Activated CD4-positive, alpha-beta memory T cell treated with anti-CD3 and anti-CD28 coated beads for 36 hours (primary cell): ENCODE measurements at regions of chr6 and their contacts with region 1.

Region 1: DNA sequence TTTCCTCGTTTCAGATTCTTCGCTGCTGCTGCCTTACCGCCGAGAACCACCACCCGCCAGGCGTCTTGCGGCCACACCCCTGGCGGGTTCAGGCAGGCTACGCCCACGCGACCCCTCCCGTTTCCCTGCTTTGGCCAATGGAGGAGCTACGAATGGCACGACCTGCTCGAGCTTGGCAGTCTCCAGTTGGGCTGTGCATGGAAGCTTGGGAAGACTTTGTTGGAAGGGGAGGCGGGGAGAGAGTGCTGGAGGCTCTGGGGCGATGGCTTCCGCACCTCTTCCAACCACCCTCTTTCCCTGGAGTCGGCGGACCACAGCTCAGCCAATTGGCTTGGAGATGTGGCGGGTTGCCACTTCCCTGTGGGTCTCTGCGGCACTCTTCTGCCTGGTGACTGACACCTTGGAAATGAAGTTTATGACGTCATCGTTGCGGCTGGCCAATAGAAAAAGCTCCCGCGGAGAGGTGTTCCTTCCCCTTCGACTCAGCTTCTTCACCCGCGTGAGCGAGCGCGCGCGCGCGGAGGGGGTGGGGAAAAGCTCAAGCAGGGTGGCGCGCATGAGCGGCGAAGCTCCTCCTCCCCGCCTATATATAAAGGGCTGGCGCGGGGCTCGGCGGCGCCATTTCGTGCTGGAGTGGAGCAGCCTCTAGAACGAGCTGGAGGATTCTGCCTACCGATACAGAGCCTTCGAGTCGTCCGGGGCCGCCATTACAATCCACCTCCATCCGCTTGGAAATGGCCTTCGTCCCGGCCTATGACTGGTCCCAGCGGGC is 3.4 kb downstream of the BRD2 start:
- DNase-seq: peak; percentile 100
- H3K4me3 Mint-ChIP-seq: peak overlapping the region; percentile 98
- H3K27ac Mint-ChIP-seq: peak overlapping the region; percentile 99
- H3K4me1 Mint-ChIP-seq: peaks cover 26% of the 10 kb centered on the region
- H3K27me3 Mint-ChIP-seq: no peaks in the 10 kb centered on the region

Region 2: DNA sequence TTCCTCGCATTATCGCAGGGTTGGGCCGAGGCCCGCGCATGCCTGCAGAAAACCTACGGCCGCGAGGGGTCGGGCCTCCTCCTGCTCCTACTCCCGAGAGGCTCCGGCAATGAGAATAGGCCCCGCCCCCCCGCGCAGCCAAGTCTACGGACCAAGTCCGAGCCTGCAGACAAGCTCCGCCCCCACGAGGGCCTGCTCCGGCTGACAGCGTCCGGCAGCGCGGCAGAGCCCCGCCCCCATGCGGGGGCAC is 776.2 kb before region 1 on chr6:
- CTCF ChIA-PET with region 1: interaction called, 3 read pairs
- POLR2A ChIA-PET with region 1: no interaction called
- intact Hi-C with region 1: loop called (anchors 1 kb)
- DNase-seq: peak; percentile 100
- H3K4me3 Mint-ChIP-seq: peak overlapping the region; percentile 96
- H3K27ac Mint-ChIP-seq: peak overlapping the region; percentile 98
- H3K4me1 Mint-ChIP-seq: peaks cover 23% of the 10 kb centered on the region
- H3K27me3 Mint-ChIP-seq: no peaks in the 10 kb centered on the region

Region 3: GRCh38 chr6:32597024-32597423 is 374.7 kb before region 1 on chr6:
- CTCF ChIA-PET with region 1: no interaction called
- POLR2A ChIA-PET with region 1: no interaction called
- intact Hi-C with region 1: no loop called
- DNase-seq: no peak
- H3K4me3 Mint-ChIP-seq: no peak overlapping the region
- H3K27ac Mint-ChIP-seq: no peak overlapping the region
- H3K4me1 Mint-ChIP-seq: no peaks in the 10 kb centered on the region
- H3K27me3 Mint-ChIP-seq: no peaks in the 10 kb centered on the region

Region 4: DNA sequence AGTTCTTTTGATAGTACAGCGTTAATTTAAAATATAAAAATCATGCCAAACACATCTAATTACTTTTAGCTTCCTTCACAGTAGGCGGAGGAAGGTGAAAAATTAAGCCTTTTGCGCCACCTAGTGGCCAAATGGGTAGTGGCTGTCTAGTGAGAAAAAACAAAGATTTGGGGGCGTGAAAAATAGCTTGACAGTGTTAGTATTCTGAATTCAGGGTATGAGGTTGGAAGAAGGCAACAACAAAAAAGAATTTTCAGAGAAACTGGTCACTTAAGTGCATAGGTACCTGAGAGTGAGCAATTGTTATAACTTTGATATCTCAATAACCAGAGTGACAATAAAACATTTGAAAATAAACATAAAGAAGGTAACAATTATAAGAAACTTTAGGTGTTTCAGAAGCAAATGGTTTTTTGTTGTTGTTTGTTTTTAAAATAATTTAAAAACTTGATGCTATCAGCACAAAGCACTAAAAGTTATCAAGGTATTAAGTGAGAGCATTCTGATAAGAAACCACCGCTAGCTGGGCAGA is 103.4 kb before region 1 on chr6:
- CTCF ChIA-PET with region 1: interaction called, 6 read pairs
- POLR2A ChIA-PET with region 1: interaction called, 10 read pairs
- intact Hi-C with region 1: no loop called
- DNase-seq: peak; percentile 90
- H3K4me3 Mint-ChIP-seq: no peak overlapping the region
- H3K27ac Mint-ChIP-seq: no peak overlapping the region
- H3K4me1 Mint-ChIP-seq: peaks cover 33% of the 10 kb centered on the region
- H3K27me3 Mint-ChIP-seq: no peaks in the 10 kb centered on the region

Region 5: DNA sequence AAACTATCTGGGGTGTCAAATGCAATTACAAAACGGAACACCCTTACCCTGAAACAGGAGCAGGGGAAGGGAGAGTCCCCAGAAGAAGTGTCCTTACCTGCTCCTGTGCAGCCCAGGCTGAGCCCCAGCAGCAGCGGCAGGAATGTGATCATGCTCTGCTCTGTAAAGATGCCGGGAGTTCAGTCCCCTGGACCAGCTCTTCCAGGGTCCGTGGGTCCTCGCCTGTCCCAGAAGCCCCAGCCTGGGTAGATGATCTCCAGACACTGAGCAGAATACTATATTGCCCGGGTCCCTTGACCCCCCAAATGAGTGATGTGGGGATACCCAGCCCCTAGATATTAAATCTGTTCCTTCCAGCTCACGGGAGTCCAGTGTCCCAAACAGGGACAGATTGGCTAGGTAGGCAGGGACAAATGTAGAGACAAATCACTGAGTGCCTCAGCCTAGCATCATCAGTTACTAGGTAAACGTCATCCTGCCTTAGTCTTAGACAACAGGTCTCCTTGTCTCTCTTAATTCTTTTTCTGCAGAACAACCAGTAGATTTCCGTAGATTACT is 31.0 kb before region 1 on chr6 and contains the start of gene HLA-DMB:
- CTCF ChIA-PET with region 1: interaction called, 61 read pairs
- POLR2A ChIA-PET with region 1: interaction called, 59 read pairs
- intact Hi-C with region 1: loop called (anchors 1 kb)
- DNase-seq: peak; percentile 52
- H3K4me3 Mint-ChIP-seq: peak within 1 kb of the TSS; percentile 77
- H3K27ac Mint-ChIP-seq: peak within 1 kb of the TSS; percentile 87
- H3K4me1 Mint-ChIP-seq: peaks cover 59% of the 10 kb centered on the region
- H3K27me3 Mint-ChIP-seq: no peaks in the 10 kb centered on the region
- total RNA-seq, gene HLA-DMB: 1.6 to 1.9 TPM

Region 6: GRCh38 chr6:33200219-33201146 is 228.7 kb after region 1 on chr6 and contains the starts of genes RXRB and SLC39A7:
- CTCF ChIA-PET with region 1: no interaction called
- POLR2A ChIA-PET with region 1: interaction called, 8 read pairs
- intact Hi-C with region 1: loop called (anchors 2 kb)
- DNase-seq: peak; percentile 100
- H3K4me3 Mint-ChIP-seq: peak within 1 kb of the TSS; percentile 94
- H3K27ac Mint-ChIP-seq: peak within 1 kb of the TSS; percentile 96
- H3K4me1 Mint-ChIP-seq: peaks cover 60% of the 10 kb centered on the region
- H3K27me3 Mint-ChIP-seq: no peaks in the 10 kb centered on the region
- total RNA-seq, gene RXRB: 40.9 to 41.4 TPM
- total RNA-seq, gene SLC39A7: 42.0 to 45.7 TPM

Region 7: GRCh38 chr6:33417903-33418689 is 446.3 kb after region 1 on chr6 and contains the start of gene CUTA:
- CTCF ChIA-PET with region 1: no interaction called
- POLR2A ChIA-PET with region 1: interaction called, 3 read pairs
- intact Hi-C with region 1: loop called (anchors 5 kb)
- DNase-seq: peak; percentile 100
- H3K4me3 Mint-ChIP-seq: peak within 1 kb of the TSS; percentile 94
- H3K27ac Mint-ChIP-seq: peak within 1 kb of the TSS; percentile 99
- H3K4me1 Mint-ChIP-seq: peaks cover 56% of the 10 kb centered on the region
- H3K27me3 Mint-ChIP-seq: no peaks in the 10 kb centered on the region
- total RNA-seq, gene CUTA: 190 to 198 TPM